CD4-positive, alpha-beta T cell (primary cell): ENCODE measurements at regions of chr19 and their contacts with region 1.

Region 1: GRCh38 chr19:38544034-38544958 is 73.5 kb downstream of the MAP4K1 start:
- DNase-seq: peak in 5 of 14 experiments; percentile 12 to 85 (median 75)
- ATAC-seq: peak; percentile 92
- H3K4me3 ChIP-seq: no peak overlapping the region
- H3K4me3 Mint-ChIP-seq: no peak overlapping the region
- H3K27ac ChIP-seq: no peak overlapping the region
- H3K27ac Mint-ChIP-seq: peak overlapping the region; percentile 0
- H3K4me1 ChIP-seq: peaks cover 24% of the 10 kb centered on the region
- H3K4me1 Mint-ChIP-seq: peaks cover 24% of the 10 kb centered on the region
- H3K27me3 ChIP-seq: no peaks in the 10 kb centered on the region
- H3K27me3 Mint-ChIP-seq: no peaks in the 10 kb centered on the region
- CTCF ChIP-seq: peak; percentile 81

Region 2: GRCh38 chr19:38514812-38515633 is 29.3 kb before region 1 on chr19:
- CTCF ChIA-PET with region 1: interaction called, 5 read pairs
- POLR2A ChIA-PET with region 1: no interaction called
- intact Hi-C with region 1: loop called in 1 of 2 experiments (anchors 2 kb)
- DNase-seq: peak; percentile 62 to 88 (median 76)
- ATAC-seq: peak; percentile 98
- H3K4me3 ChIP-seq: no peak overlapping the region
- H3K4me3 Mint-ChIP-seq: no peak overlapping the region
- H3K27ac ChIP-seq: no peak overlapping the region
- H3K27ac Mint-ChIP-seq: no peak overlapping the region
- H3K4me1 ChIP-seq: peaks cover 15% of the 10 kb centered on the region
- H3K4me1 Mint-ChIP-seq: peaks cover 9% of the 10 kb centered on the region
- H3K27me3 ChIP-seq: no peaks in the 10 kb centered on the region
- H3K27me3 Mint-ChIP-seq: no peaks in the 10 kb centered on the region
- CTCF ChIP-seq: peak; percentile 94

Region 3: GRCh38 chr19:38559428-38560401 is 15.4 kb after region 1 on chr19:
- CTCF ChIA-PET with region 1: no interaction called
- POLR2A ChIA-PET with region 1: no interaction called
- intact Hi-C with region 1: loop called in 1 of 2 experiments (anchors 1 kb)
- DNase-seq: peak in 8 of 14 experiments; percentile 7 to 66 (median 38)
- ATAC-seq: peak; percentile 73
- H3K4me3 ChIP-seq: peak overlapping the region; percentile 7
- H3K4me3 Mint-ChIP-seq: peak overlapping the region; percentile 72
- H3K27ac ChIP-seq: no peak overlapping the region
- H3K27ac Mint-ChIP-seq: peak overlapping the region; percentile 59
- H3K4me1 ChIP-seq: peaks cover 63% of the 10 kb centered on the region
- H3K4me1 Mint-ChIP-seq: peaks cover 34% of the 10 kb centered on the region
- H3K27me3 ChIP-seq: peaks cover 3 to 4% of the 10 kb centered on the region in 2 experiments
- H3K27me3 Mint-ChIP-seq: peaks cover 22% of the 10 kb centered on the region
- CTCF ChIP-seq: no peak

Region 4: GRCh38 chr19:38891771-38892170 is 347.5 kb after region 1 on chr19:
- CTCF ChIA-PET with region 1: interaction called, 3 read pairs
- POLR2A ChIA-PET with region 1: no interaction called
- intact Hi-C with region 1: loop called in 1 of 2 experiments (anchors 5 kb)
- DNase-seq: peak in 1 of 14 experiments; percentile 2
- ATAC-seq: no peak
- H3K4me3 ChIP-seq: no peak overlapping the region
- H3K4me3 Mint-ChIP-seq: no peak overlapping the region
- H3K27ac ChIP-seq: no peak overlapping the region
- H3K27ac Mint-ChIP-seq: no peak overlapping the region
- H3K4me1 ChIP-seq: peaks cover 16% of the 10 kb centered on the region
- H3K4me1 Mint-ChIP-seq: peaks cover 6% of the 10 kb centered on the region
- H3K27me3 ChIP-seq: no peaks in the 10 kb centered on the region
- H3K27me3 Mint-ChIP-seq: no peaks in the 10 kb centered on the region
- CTCF ChIP-seq: no peak